SK-N-SH (cell line): ENCODE measurements at regions of chr4 and their contacts with region 1.

Region 1: DNA sequence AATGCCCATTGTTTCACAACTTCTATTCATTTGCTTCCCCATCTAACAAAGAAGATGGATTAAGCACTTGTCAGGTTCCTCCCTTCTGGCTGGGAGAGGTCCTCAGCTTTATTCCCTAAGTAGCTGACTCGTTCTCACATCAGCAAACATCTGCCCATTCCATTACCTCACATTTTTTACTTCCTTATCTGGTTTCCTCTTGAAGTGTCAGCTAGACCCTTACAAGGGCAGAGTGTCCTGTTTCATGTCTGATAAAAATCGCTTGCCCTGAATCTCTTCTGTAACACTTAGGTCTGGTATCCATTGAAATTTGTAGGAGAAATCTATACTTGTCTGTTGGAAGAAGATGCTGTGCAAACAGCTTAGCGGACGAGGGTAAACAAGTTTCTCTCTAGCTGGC is 34.7 kb downstream of the TMPRSS11A start:
- DNase-seq: no peak
- H3K4me3 ChIP-seq: no peak overlapping the region
- H3K27ac ChIP-seq: no peak overlapping the region
- H3K4me1 ChIP-seq: no peaks in the 10 kb centered on the region
- H3K27me3 ChIP-seq: no peaks in the 10 kb centered on the region
- CTCF ChIP-seq: no peak
- EP300 ChIP-seq: no peak
- RAD21 ChIP-seq: no peak

Region 2: DNA sequence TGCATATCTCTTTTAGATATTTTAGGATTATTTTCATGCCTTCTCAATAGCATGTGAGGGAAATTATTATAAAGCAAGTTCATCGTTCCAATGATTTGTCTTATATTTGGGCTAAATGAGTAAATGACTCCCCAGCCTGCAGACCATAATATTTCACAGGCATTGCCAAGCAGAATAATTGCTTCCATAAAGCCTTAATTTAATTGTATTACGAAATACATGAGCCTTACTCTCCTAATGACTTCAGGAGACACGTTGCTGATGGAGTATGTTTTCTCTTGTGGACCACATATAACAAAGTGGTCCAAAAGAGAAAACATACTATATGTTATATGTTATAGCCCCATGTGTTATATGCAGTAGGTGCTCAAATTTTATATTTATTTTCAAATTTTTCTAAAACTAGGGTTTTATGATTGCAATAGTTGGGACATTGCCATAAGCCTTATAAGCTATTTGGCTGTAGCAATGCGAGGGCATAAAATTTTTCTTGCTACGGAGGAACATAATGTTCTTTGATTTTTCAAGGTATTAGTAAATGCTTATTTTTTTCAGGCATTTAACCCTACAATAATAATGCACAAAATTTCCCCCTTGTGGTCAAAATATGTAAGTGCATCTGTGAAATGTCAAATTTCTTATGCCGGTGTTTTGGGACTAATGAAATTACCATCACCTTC is 18.5 kb before region 1 on chr4:
- CTCF ChIA-PET with region 1: interaction called, 11 read pairs
- POLR2A ChIA-PET with region 1: no interaction called
- DNase-seq: no peak
- H3K4me3 ChIP-seq: no peak overlapping the region
- H3K27ac ChIP-seq: no peak overlapping the region
- H3K4me1 ChIP-seq: no peaks in the 10 kb centered on the region
- H3K27me3 ChIP-seq: no peaks in the 10 kb centered on the region
- CTCF ChIP-seq: peak; percentile 82
- EP300 ChIP-seq: no peak
- RAD21 ChIP-seq: peak; percentile 44; the same call in 1 of the 2 replicates

Region 3: GRCh38 chr4:67940506-67940905 is 11.9 kb after region 1 on chr4:
- CTCF ChIA-PET with region 1: no interaction called
- POLR2A ChIA-PET with region 1: no interaction called
- DNase-seq: no peak
- H3K4me3 ChIP-seq: no peak overlapping the region
- H3K27ac ChIP-seq: no peak overlapping the region
- H3K4me1 ChIP-seq: no peaks in the 10 kb centered on the region
- H3K27me3 ChIP-seq: no peaks in the 10 kb centered on the region
- CTCF ChIP-seq: no peak
- EP300 ChIP-seq: no peak
- RAD21 ChIP-seq: no peak